ENCODE measurements at regions of chr2 and their contacts with region 1.

Region 1: GRCh38 chr2:20852139-20852538 is 29.2 kb upstream of the LDAH start:
- DNase-seq: no peak
- H3K4me3 ChIP-seq: no peak overlapping the region
- H3K27ac ChIP-seq: no peak overlapping the region
- H3K4me1 ChIP-seq: no peaks in the 10 kb centered on the region
- H3K27me3 ChIP-seq: no peaks in the 10 kb centered on the region
- CTCF ChIP-seq: no peak

Region 2: DNA sequence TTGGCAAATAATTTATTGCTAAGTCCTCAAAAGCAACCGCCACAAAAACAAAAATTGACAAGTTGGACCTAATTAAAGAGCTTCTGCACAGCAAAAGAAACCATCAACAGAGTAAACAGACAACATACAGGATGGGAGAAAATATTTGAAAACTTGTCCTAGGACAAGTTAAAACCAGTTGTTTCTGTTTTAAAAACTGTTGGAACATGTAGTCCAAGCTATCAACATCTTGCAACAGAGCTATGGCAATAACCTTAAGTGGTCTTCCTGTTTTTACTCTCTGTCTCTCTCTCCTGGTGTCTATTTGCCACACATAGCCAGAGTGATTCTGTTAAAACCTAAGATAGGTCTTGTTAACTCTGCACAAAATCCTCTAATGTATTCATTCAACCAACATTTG is 36.1 kb after region 1 on chr2:
- CTCF ChIA-PET with region 1: no interaction called
- dilution Hi-C with region 1: no loop called
- in situ Hi-C with region 1: no loop called
- intact Hi-C with region 1: no loop called
- DNase-seq: no peak
- H3K4me3 ChIP-seq: no peak overlapping the region
- H3K27ac ChIP-seq: no peak overlapping the region
- H3K4me1 ChIP-seq: no peaks in the 10 kb centered on the region
- H3K27me3 ChIP-seq: no peaks in the 10 kb centered on the region
- CTCF ChIP-seq: no peak

Region 3: DNA sequence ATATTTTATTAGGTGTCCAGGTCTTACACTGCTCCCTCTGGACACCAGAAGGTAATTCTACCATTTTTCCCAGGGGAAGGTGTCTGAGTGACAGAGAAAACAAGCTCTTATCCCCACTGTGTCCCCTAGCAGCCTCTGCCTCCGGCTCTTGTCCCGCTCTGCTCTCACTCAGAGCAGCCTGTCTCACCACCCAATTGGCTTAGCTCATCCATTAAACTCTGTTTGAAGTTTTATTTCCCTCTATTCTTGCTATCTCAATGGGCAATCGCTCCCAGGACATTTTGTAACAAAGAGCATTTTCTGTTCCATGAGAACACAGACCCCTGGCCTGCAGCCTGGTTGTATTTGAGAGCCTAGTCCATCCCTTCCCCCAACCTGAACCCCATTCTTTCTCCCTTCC is 61.4 kb after region 1 on chr2:
- CTCF ChIA-PET with region 1: no interaction called
- dilution Hi-C with region 1: no loop called
- in situ Hi-C with region 1: no loop called
- intact Hi-C with region 1: no loop called
- DNase-seq: no peak
- H3K4me3 ChIP-seq: no peak overlapping the region
- H3K27ac ChIP-seq: no peak overlapping the region
- H3K4me1 ChIP-seq: peaks cover 29% of the 10 kb centered on the region
- H3K27me3 ChIP-seq: no peaks in the 10 kb centered on the region
- CTCF ChIP-seq: peak in 1 of 2 donors; percentile 5

Region 4: GRCh38 chr2:21118302-21118920 is 266.3 kb after region 1 on chr2:
- CTCF ChIA-PET with region 1: no interaction called
- dilution Hi-C with region 1: no loop called
- in situ Hi-C with region 1: no loop called
- intact Hi-C with region 1: loop called (anchors 10 kb)
- DNase-seq: peak; percentile 11
- H3K4me3 ChIP-seq: no peak overlapping the region
- H3K27ac ChIP-seq: no peak overlapping the region
- H3K4me1 ChIP-seq: no peaks in the 10 kb centered on the region
- H3K27me3 ChIP-seq: no peaks in the 10 kb centered on the region
- CTCF ChIP-seq: peak; percentile 35 to 62